Common myeloid progenitor, CD34-positive (primary cell): ENCODE measurements at regions of chr1 and their contacts with region 1.

Region 1: GRCh38 chr1:157194739-157195520 is 56.7 kb upstream of the ETV3 start:
- DNase-seq: no peak
- H3K4me3 ChIP-seq: peak overlapping the region in 3 of 7 experiments; percentile 36 to 58 (median 42)
- H3K27ac ChIP-seq: no peak overlapping the region
- H3K4me1 ChIP-seq: peaks cover 0 to 9% (median 4%) of the 10 kb centered on the region in 4 experiments
- H3K27me3 ChIP-seq: peaks cover 0 to 40% (median 20%) of the 10 kb centered on the region in 5 experiments

Region 2: GRCh38 chr1:157183870-157184269 is 11.1 kb before region 1 on chr1:
- CTCF ChIA-PET with region 1: interaction called, 11 read pairs
- POLR2A ChIA-PET with region 1: no interaction called
- DNase-seq: no peak
- H3K4me3 ChIP-seq: no peak overlapping the region
- H3K27ac ChIP-seq: no peak overlapping the region
- H3K4me1 ChIP-seq: peaks cover 3 to 23% (median 19%) of the 10 kb centered on the region in 4 experiments
- H3K27me3 ChIP-seq: no peaks in the 10 kb centered on the region

Region 3: DNA sequence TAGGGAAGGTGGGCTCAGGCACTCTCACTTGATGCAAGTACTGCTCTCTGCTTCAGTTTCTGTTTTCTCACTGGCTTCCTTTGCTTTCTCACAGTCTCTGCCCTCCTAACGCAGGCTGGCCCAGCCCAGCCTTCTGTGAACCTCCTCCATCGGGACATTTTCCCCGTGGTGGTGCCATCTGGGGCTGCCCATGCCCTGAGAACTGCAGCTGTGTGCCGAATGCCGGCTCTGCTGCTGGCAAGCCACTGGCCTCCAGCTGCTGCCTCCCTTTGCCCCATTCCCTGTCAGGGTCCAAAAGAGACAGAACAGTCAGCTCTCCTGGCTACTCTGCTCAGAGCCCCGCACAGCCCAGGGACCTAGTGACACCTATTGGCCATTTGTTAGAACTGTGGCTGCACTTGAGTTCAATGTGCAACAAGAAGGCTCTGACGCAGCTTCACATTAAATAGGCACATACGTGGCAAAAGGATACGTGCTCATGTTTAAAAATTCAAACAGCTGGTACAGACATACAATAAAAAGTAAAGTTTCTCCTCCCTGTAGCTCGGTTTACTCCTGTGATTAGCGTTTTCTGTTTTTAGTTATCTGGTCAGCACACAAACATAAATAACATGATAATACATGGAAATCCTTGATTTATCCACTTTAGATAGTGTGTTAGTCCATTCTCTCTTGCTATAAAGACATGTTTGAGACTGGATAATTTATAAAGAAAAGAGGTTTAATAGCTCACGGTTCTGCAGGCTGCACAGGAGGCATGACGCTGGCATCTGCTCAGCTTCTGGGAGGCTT is 310.7 kb after region 1 on chr1:
- CTCF ChIA-PET with region 1: interaction called, 12 read pairs
- POLR2A ChIA-PET with region 1: no interaction called
- DNase-seq: peak; percentile 66 to 82 (median 78)
- H3K4me3 ChIP-seq: no peak overlapping the region
- H3K27ac ChIP-seq: no peak overlapping the region
- H3K4me1 ChIP-seq: no peaks in the 10 kb centered on the region
- H3K27me3 ChIP-seq: no peaks in the 10 kb centered on the region